Vagina (tissue), 2 donors: ENCODE measurements at regions of chr10 and their contacts with region 1.

Region 1: GRCh38 chr10:11180228-11180627 is 162.6 kb downstream of the CELF2 start:
- DNase-seq: no peak
- H3K4me3 ChIP-seq: no peak overlapping the region
- H3K27ac ChIP-seq: no peak overlapping the region
- H3K4me1 ChIP-seq: peaks cover 14% of the 10 kb centered on the region
- H3K27me3 ChIP-seq: no peaks in the 10 kb centered on the region
- CTCF ChIP-seq: no peak
- POLR2A ChIP-seq: no peak

Region 2: DNA sequence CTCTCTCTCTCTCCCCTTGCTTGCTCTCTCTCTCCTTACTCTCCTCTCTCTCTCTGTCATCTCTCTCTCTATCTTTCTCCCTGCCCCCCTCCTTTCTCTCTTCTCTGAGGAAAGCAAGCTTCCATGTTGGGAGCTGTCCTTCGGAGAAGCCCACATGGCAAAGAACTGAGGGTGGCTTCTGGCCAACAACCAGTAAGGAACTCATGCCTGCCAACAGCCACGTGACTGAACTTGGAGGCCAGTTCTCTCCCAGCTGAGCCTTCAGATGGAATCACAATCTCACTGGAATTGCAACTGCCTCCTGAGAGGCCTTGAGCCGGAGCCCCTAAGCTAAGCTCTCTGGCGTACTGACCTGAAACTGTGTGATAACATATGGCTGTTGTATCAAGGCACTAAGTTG is 876.5 kb after region 1 on chr10:
- intact Hi-C with region 1: loop called (anchors 5 kb)
- DNase-seq: no peak
- H3K4me3 ChIP-seq: no peak overlapping the region
- H3K27ac ChIP-seq: no peak overlapping the region
- H3K4me1 ChIP-seq: peaks cover 4% of the 10 kb centered on the region
- H3K27me3 ChIP-seq: no peaks in the 10 kb centered on the region
- CTCF ChIP-seq: no peak
- POLR2A ChIP-seq: no peak